Activated B cell treated with CpG ODN at 0.5 μM for 24 hours (primary cell): ENCODE measurements at regions of chr10 and their contacts with region 1.

Region 1: GRCh38 chr10:92087750-92088395 is 164.3 kb downstream of the BTAF1 start:
- DNase-seq: peak; percentile 22
- ATAC-seq: peak; percentile 100
- H3K4me3 Mint-ChIP-seq: no peak overlapping the region
- H3K27ac Mint-ChIP-seq: no peak overlapping the region
- H3K4me1 Mint-ChIP-seq: peaks cover 7% of the 10 kb centered on the region
- H3K27me3 Mint-ChIP-seq: no peaks in the 10 kb centered on the region
- CTCF ChIP-seq: no peak

Region 2: GRCh38 chr10:92142949-92143348 is 55.1 kb after region 1 on chr10:
- CTCF ChIA-PET with region 1: interaction called, 4 read pairs
- POLR2A ChIA-PET with region 1: no interaction called
- intact Hi-C with region 1: loop called (anchors 5 kb)
- DNase-seq: no peak
- ATAC-seq: peak; percentile 25
- H3K4me3 Mint-ChIP-seq: peak overlapping the region; percentile 73
- H3K27ac Mint-ChIP-seq: peak overlapping the region; percentile 83
- H3K4me1 Mint-ChIP-seq: peaks cover 61% of the 10 kb centered on the region
- H3K27me3 Mint-ChIP-seq: no peaks in the 10 kb centered on the region
- CTCF ChIP-seq: no peak

Region 3: GRCh38 chr10:92181575-92181974 is 93.7 kb after region 1 on chr10:
- CTCF ChIA-PET with region 1: interaction called, 3 read pairs
- POLR2A ChIA-PET with region 1: no interaction called
- intact Hi-C with region 1: loop called (anchors 2 kb)
- DNase-seq: no peak
- ATAC-seq: no peak
- H3K4me3 Mint-ChIP-seq: no peak overlapping the region
- H3K27ac Mint-ChIP-seq: no peak overlapping the region
- H3K4me1 Mint-ChIP-seq: peaks cover 7% of the 10 kb centered on the region
- H3K27me3 Mint-ChIP-seq: no peaks in the 10 kb centered on the region
- CTCF ChIP-seq: no peak

Region 4: GRCh38 chr10:92240289-92241157 is 152.7 kb after region 1 on chr10:
- CTCF ChIA-PET with region 1: no interaction called
- POLR2A ChIA-PET with region 1: no interaction called
- intact Hi-C with region 1: loop called (anchors 1 kb)
- DNase-seq: peak; percentile 32
- ATAC-seq: peak; percentile 66
- H3K4me3 Mint-ChIP-seq: peak overlapping the region; percentile 96
- H3K27ac Mint-ChIP-seq: peak overlapping the region; percentile 85
- H3K4me1 Mint-ChIP-seq: peaks cover 39% of the 10 kb centered on the region
- H3K27me3 Mint-ChIP-seq: no peaks in the 10 kb centered on the region
- CTCF ChIP-seq: no peak

Region 5: DNA sequence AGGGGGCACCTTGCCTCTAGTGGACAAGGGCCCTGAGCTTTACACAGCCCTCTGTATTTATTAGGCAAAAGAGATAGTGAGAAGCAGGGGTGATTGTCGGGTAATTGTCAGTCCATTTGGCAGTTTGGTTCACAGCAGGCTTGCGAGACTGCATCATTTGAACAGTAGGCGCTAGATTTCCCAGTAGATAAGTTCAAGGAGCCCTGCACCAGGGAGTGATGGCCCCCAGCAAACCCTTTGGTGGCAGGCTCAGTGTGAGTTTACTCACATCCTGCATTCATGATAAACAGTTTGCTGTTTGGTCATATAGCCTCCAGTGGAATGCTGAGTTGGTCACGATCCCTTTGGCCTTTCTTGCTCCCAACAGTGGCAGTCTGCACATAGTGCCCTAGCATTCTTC is 262.5 kb after region 1 on chr10:
- CTCF ChIA-PET with region 1: no interaction called
- POLR2A ChIA-PET with region 1: no interaction called
- intact Hi-C with region 1: loop called (anchors 5 kb)
- DNase-seq: no peak
- ATAC-seq: no peak
- H3K4me3 Mint-ChIP-seq: no peak overlapping the region
- H3K27ac Mint-ChIP-seq: no peak overlapping the region
- H3K4me1 Mint-ChIP-seq: no peaks in the 10 kb centered on the region
- H3K27me3 Mint-ChIP-seq: no peaks in the 10 kb centered on the region
- CTCF ChIP-seq: no peak

Region 6: GRCh38 chr10:92432596-92432995 is 344.7 kb after region 1 on chr10:
- CTCF ChIA-PET with region 1: interaction called, 72 read pairs
- POLR2A ChIA-PET with region 1: interaction called, 4 read pairs
- intact Hi-C with region 1: loop called (anchors 1 kb)
- DNase-seq: no peak
- ATAC-seq: no peak
- H3K4me3 Mint-ChIP-seq: no peak overlapping the region
- H3K27ac Mint-ChIP-seq: no peak overlapping the region
- H3K4me1 Mint-ChIP-seq: no peaks in the 10 kb centered on the region
- H3K27me3 Mint-ChIP-seq: no peaks in the 10 kb centered on the region
- CTCF ChIP-seq: no peak

Region 7: GRCh38 chr10:92573798-92574547 is 486.1 kb after region 1 on chr10 and contains the start of gene IDE:
- CTCF ChIA-PET with region 1: no interaction called
- POLR2A ChIA-PET with region 1: interaction called, 8 read pairs
- intact Hi-C with region 1: loop called (anchors 5 kb)
- DNase-seq: peak; percentile 84
- ATAC-seq: peak; percentile 76
- H3K4me3 Mint-ChIP-seq: peak within 1 kb of the TSS; percentile 88
- H3K27ac Mint-ChIP-seq: peak within 1 kb of the TSS; percentile 85
- H3K4me1 Mint-ChIP-seq: peaks cover 40% of the 10 kb centered on the region
- H3K27me3 Mint-ChIP-seq: no peaks in the 10 kb centered on the region
- CTCF ChIP-seq: no peak
- total RNA-seq, gene IDE: 37.7 and 39.2 TPM in 2 replicates